HCT116 (cell line): ENCODE measurements at regions of chr10 and their contacts with region 1.

Region 1: GRCh38 chr10:127906548-127907377 is at the start of gene PTPRE:
- DNase-seq: peak; percentile 40
- ATAC-seq: peak; percentile 92
- H3K4me3 ChIP-seq: peak within 1 kb of the TSS; percentile 44 to 62
- H3K27ac ChIP-seq: peak within 1 kb of the TSS; percentile 56; the same call in 1 of the 2 replicates
- H3K4me1 ChIP-seq: peaks cover 25 to 46% of the 10 kb centered on the region in 2 experiments
- H3K27me3 ChIP-seq: no peaks in the 10 kb centered on the region
- CTCF ChIP-seq: peak; percentile 64 to 78 (median 67)
- POLR2A ChIP-seq: no peak
- RAD21 ChIP-seq: peak; percentile 93
- total RNA-seq, gene PTPRE: 12.3 TPM

Region 2: GRCh38 chr10:127872003-127872761 is 34.6 kb before region 1 on chr10:
- CTCF ChIA-PET with region 1: no interaction called
- POLR2A ChIA-PET with region 1: no interaction called
- RAD21 ChIA-PET with region 1: no interaction called
- intact Hi-C with region 1: no loop called
- DNase-seq: no peak
- ATAC-seq: no peak
- H3K4me3 ChIP-seq: no peak overlapping the region
- H3K27ac ChIP-seq: no peak overlapping the region
- H3K4me1 ChIP-seq: no peaks in the 10 kb centered on the region
- H3K27me3 ChIP-seq: peaks cover 15% of the 10 kb centered on the region; the same call in 1 of the 2 replicates
- CTCF ChIP-seq: no peak
- POLR2A ChIP-seq: no peak
- RAD21 ChIP-seq: no peak

Region 3: DNA sequence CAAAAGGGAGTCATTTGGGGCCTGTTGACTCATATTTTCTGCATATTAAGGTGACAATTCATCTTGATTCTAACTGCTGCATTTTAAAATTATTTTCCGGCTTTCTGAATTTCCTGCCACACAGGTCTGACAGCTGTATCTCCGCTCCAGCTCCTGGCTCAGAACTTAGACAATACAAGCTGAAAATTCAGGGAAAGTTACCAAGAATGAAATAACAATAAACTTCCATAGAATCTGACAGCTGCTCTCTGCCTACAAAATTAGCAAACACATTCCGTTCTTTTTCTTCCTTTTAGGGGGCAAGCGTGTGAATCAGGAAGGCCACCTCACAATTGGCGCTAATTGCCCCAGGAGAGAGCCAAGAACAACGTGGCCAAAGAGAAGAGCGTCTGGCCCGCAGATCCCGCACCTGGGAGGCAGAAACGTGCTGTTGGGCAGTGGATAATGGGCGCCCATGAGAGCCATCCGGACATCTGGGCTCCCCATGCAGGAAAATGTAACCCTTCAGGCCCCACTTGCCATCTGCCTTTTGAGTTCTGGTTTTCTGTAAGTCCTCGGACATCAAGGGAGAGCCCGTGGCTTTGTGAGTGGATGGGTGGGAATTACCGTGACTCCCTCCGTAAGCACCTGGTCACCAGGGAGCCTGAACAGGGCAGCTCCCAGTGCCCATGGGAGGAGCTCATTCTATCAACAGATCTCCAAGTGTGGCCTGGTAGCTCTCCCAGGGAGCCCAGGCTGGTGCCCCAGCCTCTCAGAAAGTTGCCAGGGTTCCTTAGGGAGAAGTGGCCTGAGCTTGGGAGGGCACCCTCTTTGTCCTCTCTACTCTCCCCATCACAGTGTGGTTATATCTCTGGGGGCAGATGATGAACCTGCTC is 19.0 kb before region 1 on chr10:
- CTCF ChIA-PET with region 1: no interaction called
- POLR2A ChIA-PET with region 1: no interaction called
- RAD21 ChIA-PET with region 1: no interaction called
- intact Hi-C with region 1: no loop called
- DNase-seq: no peak
- ATAC-seq: no peak
- H3K4me3 ChIP-seq: no peak overlapping the region
- H3K27ac ChIP-seq: no peak overlapping the region
- H3K4me1 ChIP-seq: no peaks in the 10 kb centered on the region
- H3K27me3 ChIP-seq: no peaks in the 10 kb centered on the region
- CTCF ChIP-seq: no peak
- POLR2A ChIP-seq: no peak
- RAD21 ChIP-seq: no peak

Region 4: DNA sequence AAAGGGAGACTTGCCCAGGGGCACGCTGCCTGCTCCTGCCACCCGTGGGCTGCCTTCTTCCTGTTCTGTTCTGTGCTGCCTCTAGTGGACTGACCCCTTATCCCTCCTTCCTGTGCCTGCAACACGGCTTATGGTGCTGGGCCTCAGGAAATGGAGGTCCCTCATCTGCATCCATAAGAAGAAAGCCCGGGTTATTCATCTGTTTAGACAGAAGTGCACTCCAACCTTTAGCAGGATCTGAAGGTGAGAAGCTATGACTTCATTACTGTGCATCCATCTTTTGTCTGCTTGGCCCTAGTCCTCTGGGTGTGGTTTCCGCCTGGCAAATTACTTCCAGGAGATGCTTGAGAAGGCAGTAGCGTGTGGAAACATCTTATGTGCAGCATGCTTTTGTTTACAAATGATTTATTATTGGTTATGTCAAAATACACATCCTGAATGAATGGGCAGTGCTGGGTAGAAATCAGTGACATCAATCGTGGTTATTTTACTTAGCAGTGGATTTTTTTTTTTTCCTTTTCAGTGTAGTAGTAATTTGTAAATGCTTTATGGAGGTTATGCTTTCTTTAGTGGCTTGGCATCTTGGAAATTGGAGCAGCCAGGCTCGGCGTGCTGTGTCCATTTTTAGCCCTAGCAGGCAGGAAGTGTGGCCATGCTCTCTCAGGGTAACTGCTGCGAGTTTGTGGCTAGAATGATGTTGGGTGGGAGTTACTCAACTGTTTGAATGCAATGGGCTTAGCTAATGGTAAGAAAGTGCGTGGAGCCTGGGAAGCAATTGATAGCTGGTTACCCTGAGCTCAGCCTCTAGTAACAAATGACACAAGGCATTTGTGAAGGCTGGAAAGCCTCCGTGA is 12.9 kb after region 1 on chr10:
- CTCF ChIA-PET with region 1: interaction called, 14 read pairs
- POLR2A ChIA-PET with region 1: no interaction called
- RAD21 ChIA-PET with region 1: no interaction called
- intact Hi-C with region 1: no loop called
- DNase-seq: no peak
- ATAC-seq: peak; percentile 68
- H3K4me3 ChIP-seq: no peak overlapping the region
- H3K27ac ChIP-seq: no peak overlapping the region
- H3K4me1 ChIP-seq: peaks cover 21 to 58% of the 10 kb centered on the region in 2 experiments
- H3K27me3 ChIP-seq: no peaks in the 10 kb centered on the region
- CTCF ChIP-seq: peak in 2 of 3 experiments; percentile 66 to 67; a peak in 4 of 6 replicates
- POLR2A ChIP-seq: no peak
- RAD21 ChIP-seq: 0 out of 2 replicates have a peak, but pooled peaks have one; percentile 6

Region 5: GRCh38 chr10:128011175-128011979 is 104.6 kb after region 1 on chr10:
- CTCF ChIA-PET with region 1: interaction called, 69 read pairs
- POLR2A ChIA-PET with region 1: interaction called, 11 read pairs
- RAD21 ChIA-PET with region 1: interaction called, 14 to 20 read pairs
- intact Hi-C with region 1: loop called (anchors 1 kb)
- DNase-seq: peak; percentile 54
- ATAC-seq: peak; percentile 95
- H3K4me3 ChIP-seq: no peak overlapping the region; a peak in 1 of 4 replicates
- H3K27ac ChIP-seq: no peak overlapping the region
- H3K4me1 ChIP-seq: peaks cover 3 to 9% of the 10 kb centered on the region in 2 experiments; a peak in 3 of 4 replicates
- H3K27me3 ChIP-seq: no peaks in the 10 kb centered on the region; the same call in 1 of the 2 replicates
- CTCF ChIP-seq: peak; percentile 98 to 99 (median 99)
- POLR2A ChIP-seq: no peak
- RAD21 ChIP-seq: peak; percentile 100

Region 6: GRCh38 chr10:128542659-128543058 is 635.9 kb after region 1 on chr10:
- CTCF ChIA-PET with region 1: no interaction called
- POLR2A ChIA-PET with region 1: no interaction called
- RAD21 ChIA-PET with region 1: no interaction called
- intact Hi-C with region 1: no loop called
- DNase-seq: no peak
- ATAC-seq: no peak
- H3K4me3 ChIP-seq: no peak overlapping the region
- H3K27ac ChIP-seq: no peak overlapping the region
- H3K4me1 ChIP-seq: no peaks in the 10 kb centered on the region
- H3K27me3 ChIP-seq: peaks cover 65% of the 10 kb centered on the region
- CTCF ChIP-seq: no peak
- POLR2A ChIP-seq: no peak
- RAD21 ChIP-seq: no peak